Posterior vena cava (tissue), 2 donors: ENCODE measurements at regions of chr19 and their contacts with region 1.

Region 1: DNA sequence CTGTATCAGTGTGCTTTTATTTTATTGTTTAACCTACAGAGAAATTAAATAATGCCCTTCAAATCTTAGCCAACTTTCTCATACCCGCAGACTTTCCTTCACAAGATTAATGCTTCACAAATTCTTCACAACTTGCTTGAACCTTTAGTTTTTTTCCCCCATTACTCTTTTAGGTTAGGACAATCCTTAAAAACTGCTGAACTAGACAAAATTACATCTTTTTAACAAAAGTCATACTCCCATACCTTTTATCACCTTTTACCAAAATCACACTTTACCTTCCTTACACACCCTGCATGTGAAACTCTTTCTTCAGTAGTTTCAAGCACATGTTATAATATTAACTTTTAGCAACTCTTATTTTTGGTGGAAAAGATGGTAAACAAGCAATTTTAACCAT is 58.5 kb downstream of the SCGB2B2 start:
- DNase-seq: no peak

Region 2: DNA sequence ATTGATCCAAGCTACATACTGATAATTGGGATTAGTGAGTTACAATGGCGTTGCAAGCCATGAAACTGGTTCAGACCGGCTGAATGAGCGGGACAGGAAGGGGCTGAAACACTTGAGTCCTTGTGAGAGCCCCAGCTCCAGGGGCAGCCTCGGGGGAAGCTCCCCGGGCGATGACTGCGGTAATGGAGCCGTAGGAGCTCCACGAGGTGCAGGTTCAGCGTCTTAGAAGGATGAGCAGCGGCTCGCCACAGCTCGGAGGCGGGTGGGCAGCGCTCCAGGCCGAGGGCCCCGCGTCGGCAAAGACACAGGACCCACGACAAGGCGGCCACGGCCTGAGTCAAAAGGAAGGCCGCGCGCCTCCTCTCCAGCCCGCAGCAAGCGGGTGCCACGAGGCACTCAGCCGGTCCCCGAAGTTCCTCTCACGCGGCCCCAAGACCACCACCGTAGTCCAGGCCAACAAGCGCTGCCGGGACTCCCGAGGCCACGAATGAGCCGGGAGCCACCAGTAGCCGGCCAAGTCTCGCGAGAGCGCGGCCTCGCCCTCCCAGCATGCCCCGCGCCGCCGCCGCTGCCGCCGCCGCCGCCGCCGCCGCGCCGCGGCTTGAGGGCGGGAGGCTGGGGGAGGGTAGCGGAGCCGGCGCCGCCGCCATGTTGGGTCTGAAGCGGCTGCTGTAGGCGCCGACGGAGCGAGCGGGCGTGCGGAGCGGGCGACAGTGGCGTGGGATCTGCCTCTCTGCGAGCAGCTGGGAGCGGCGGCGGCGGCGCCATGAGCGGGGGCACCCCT is 446.3 kb before region 1 on chr19 and contains the start of gene LSM14A:
- intact Hi-C with region 1: loop called in 1 of 2 experiments (anchors 5 kb)
- DNase-seq: peak; percentile 98
- total RNA-seq, gene LSM14A: 93.2 to 109 TPM

Region 3: DNA sequence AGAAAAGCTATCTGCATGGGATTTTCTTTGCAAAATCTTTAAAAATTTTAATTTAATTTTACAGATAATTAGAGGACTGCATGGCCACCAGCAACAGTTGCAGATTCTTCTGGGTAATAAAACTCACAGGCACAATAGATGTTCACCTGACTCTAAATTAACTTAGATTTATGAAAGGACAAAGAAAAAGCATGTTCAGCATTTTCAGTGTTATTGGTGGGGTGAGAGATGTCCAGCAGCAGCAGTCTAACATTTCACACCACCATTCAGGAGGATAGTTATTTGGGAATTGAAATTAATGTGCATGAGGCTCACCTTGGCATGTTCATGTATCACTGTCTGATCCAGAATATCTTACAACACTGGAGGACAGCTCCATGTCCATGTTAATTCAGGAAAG is 15.4 kb before region 1 on chr19:
- intact Hi-C with region 1: loop called in 1 of 2 experiments (anchors 2 kb)
- DNase-seq: no peak